ENCODE measurements at regions of chr3 and their contacts with region 1.

Region 1: GRCh38 chr3:143674100-143674968 is 173.9 kb downstream of the SLC9A9 start:
- DNase-seq: peak; percentile 80
- H3K4me3 ChIP-seq: no peak overlapping the region
- H3K27ac ChIP-seq: no peak overlapping the region
- H3K4me1 ChIP-seq: no peaks in the 10 kb centered on the region
- H3K27me3 ChIP-seq: peaks cover 0 to under 1% of the 10 kb centered on the region in 2 experiments
- CTCF ChIP-seq: peak; percentile 76 to 84
- POLR2A ChIP-seq: no peak

Region 2: DNA sequence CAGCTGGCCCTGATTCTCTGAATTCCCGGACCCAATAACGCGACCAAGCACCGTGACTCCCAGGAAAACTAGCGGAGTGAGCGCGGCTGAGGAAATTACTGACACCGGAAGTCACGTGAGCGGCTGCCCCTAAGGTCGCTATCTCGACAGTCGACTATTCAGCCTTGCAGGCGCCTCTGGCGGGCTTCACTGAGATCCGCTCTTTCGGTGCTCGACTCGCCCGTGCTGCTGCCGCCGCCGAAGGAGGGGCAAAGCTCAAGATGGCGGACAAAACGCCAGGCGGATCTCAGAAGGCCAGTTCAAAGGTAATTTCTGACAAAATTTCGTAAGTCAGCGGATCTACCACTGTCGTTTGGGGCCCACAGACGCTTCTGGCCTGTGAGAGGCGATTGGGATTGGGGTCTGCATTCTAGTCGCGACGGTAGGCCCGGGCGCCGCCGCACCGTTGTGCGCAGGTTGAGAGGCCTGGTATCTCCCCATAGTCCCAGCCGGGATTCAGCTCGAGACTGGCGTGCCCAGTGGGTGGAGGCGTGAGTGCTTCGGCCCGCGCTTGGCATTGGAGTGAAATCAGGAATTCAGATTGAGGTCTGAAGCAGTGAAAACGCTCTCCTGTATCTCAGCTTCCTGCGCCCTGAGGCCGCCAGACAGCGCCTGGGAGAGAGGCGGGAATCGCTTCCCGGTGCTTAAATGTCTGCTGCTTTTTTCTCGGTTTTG is 672.8 kb before region 1 on chr3 and contains the start of gene U2SURP:
- CTCF ChIA-PET with region 1: interaction called, 25 read pairs
- POLR2A ChIA-PET with region 1: no interaction called
- dilution Hi-C with region 1: no loop called
- intact Hi-C with region 1: no loop called
- DNase-seq: peak; percentile 98
- H3K4me3 ChIP-seq: peak within 1 kb of the TSS; percentile 73 to 93 (median 92)
- H3K27ac ChIP-seq: peak within 1 kb of the TSS; percentile 72
- H3K4me1 ChIP-seq: peaks cover 16% of the 10 kb centered on the region
- H3K27me3 ChIP-seq: peaks cover 0 to 2% of the 10 kb centered on the region in 2 experiments
- CTCF ChIP-seq: no peak
- POLR2A ChIP-seq: peak; percentile 84
- total RNA-seq, gene U2SURP: 85.2 and 92.4 TPM in 2 replicates

Region 3: GRCh38 chr3:143084856-143085731 is 589.2 kb before region 1 on chr3:
- CTCF ChIA-PET with region 1: interaction called, 20 read pairs
- POLR2A ChIA-PET with region 1: no interaction called
- dilution Hi-C with region 1: no loop called
- intact Hi-C with region 1: no loop called
- DNase-seq: peak; percentile 82
- H3K4me3 ChIP-seq: no peak overlapping the region
- H3K27ac ChIP-seq: no peak overlapping the region
- H3K4me1 ChIP-seq: peaks cover 3% of the 10 kb centered on the region
- H3K27me3 ChIP-seq: no peaks in the 10 kb centered on the region
- CTCF ChIP-seq: peak in 1 of 2 donors; percentile 6
- POLR2A ChIP-seq: no peak

Region 4: DNA sequence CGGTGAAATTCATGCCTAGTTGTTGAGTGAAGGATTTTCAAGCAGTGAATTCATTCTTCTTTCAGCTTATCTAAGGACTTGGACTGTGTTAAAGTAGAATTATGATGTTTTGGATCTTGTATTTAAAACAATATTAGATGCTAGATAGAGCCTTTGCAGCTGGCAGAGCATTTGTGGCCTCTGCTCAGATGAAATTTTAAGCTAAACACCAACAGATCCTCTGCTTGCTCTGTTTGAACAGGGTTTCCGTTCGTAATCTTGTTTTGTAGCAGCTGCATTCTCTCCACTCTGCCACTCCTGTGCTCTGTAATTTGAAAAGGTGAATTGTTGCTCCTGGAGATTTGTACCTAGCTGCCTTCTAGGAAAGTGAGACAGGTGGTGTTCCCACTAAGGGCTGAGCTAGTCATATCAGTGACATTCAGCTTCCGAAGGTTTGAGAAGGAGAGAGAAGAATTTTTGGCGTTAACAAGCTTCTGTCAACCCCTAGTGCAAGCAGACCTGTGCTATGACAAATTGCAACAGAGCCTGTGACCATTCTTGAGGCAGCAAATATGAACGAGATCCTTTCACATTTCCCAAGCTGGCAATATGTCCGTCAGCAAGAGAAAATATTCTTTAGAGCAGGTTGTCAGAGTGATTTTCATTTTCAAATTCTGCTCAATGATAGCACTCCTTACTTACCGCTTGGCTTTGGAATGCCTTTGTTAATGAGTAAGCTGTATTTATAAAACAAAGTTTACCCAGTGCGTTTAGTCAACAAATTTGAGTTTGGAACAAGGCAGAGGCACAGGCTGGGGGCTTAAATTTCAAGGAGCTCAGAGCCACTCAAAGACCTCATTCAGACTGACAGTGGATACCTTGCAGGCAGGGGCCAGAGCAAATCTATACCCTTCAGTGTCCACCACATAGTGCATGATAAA is 549.5 kb before region 1 on chr3:
- CTCF ChIA-PET with region 1: interaction called, 31 read pairs
- POLR2A ChIA-PET with region 1: no interaction called
- dilution Hi-C with region 1: no loop called
- intact Hi-C with region 1: loop called (anchors 1 kb)
- DNase-seq: no peak
- H3K4me3 ChIP-seq: no peak overlapping the region
- H3K27ac ChIP-seq: no peak overlapping the region
- H3K4me1 ChIP-seq: no peaks in the 10 kb centered on the region
- H3K27me3 ChIP-seq: no peaks in the 10 kb centered on the region
- CTCF ChIP-seq: no peak
- POLR2A ChIP-seq: no peak

Region 5: DNA sequence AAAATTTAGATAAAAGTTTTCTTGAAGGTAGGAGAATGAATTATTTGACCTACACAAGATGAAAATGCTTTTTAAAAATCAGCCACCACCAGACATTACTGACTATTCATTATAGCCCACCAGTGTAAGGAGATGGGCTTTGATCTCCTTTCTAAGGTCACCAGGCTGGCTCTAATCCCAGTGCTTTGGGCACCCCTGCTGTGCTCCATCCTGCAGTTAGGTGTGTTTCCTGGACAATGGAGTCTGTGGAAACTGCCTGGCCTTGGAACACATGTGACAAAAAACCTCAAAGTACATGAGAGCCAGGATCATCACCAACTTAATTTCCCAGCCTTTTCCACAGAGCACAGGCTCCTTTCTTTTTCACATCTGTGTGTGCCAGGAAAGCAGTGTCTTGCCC is 293.9 kb before region 1 on chr3:
- CTCF ChIA-PET with region 1: no interaction called
- POLR2A ChIA-PET with region 1: no interaction called
- dilution Hi-C with region 1: no loop called
- intact Hi-C with region 1: no loop called
- DNase-seq: no peak
- H3K4me3 ChIP-seq: no peak overlapping the region
- H3K27ac ChIP-seq: no peak overlapping the region
- H3K4me1 ChIP-seq: no peaks in the 10 kb centered on the region
- H3K27me3 ChIP-seq: no peaks in the 10 kb centered on the region
- CTCF ChIP-seq: no peak
- POLR2A ChIP-seq: no peak

Region 6: GRCh38 chr3:143608966-143609365 is 65.4 kb before region 1 on chr3:
- CTCF ChIA-PET with region 1: no interaction called
- POLR2A ChIA-PET with region 1: no interaction called
- dilution Hi-C with region 1: no loop called
- intact Hi-C with region 1: no loop called
- DNase-seq: no peak
- H3K4me3 ChIP-seq: no peak overlapping the region
- H3K27ac ChIP-seq: no peak overlapping the region
- H3K4me1 ChIP-seq: no peaks in the 10 kb centered on the region
- H3K27me3 ChIP-seq: no peaks in the 10 kb centered on the region
- CTCF ChIP-seq: no peak
- POLR2A ChIP-seq: no peak

Region 7: GRCh38 chr3:143644370-143645089 is 29.8 kb before region 1 on chr3:
- CTCF ChIA-PET with region 1: interaction called, 24 read pairs
- POLR2A ChIA-PET with region 1: no interaction called
- dilution Hi-C with region 1: no loop called
- intact Hi-C with region 1: loop called (anchors 2 kb)
- DNase-seq: peak; percentile 87
- H3K4me3 ChIP-seq: no peak overlapping the region
- H3K27ac ChIP-seq: no peak overlapping the region
- H3K4me1 ChIP-seq: peaks cover 11% of the 10 kb centered on the region
- H3K27me3 ChIP-seq: no peaks in the 10 kb centered on the region
- CTCF ChIP-seq: peak; percentile 55 to 60
- POLR2A ChIP-seq: no peak

Region 8: GRCh38 chr3:143685491-143685890 is 11.2 kb after region 1 on chr3:
- CTCF ChIA-PET with region 1: interaction called, 37 read pairs
- POLR2A ChIA-PET with region 1: no interaction called
- dilution Hi-C with region 1: no loop called
- intact Hi-C with region 1: no loop called
- DNase-seq: no peak
- H3K4me3 ChIP-seq: no peak overlapping the region
- H3K27ac ChIP-seq: no peak overlapping the region
- H3K4me1 ChIP-seq: no peaks in the 10 kb centered on the region
- H3K27me3 ChIP-seq: peaks cover 0 to 2% of the 10 kb centered on the region in 2 experiments
- CTCF ChIP-seq: no peak
- POLR2A ChIP-seq: no peak

Region 9: DNA sequence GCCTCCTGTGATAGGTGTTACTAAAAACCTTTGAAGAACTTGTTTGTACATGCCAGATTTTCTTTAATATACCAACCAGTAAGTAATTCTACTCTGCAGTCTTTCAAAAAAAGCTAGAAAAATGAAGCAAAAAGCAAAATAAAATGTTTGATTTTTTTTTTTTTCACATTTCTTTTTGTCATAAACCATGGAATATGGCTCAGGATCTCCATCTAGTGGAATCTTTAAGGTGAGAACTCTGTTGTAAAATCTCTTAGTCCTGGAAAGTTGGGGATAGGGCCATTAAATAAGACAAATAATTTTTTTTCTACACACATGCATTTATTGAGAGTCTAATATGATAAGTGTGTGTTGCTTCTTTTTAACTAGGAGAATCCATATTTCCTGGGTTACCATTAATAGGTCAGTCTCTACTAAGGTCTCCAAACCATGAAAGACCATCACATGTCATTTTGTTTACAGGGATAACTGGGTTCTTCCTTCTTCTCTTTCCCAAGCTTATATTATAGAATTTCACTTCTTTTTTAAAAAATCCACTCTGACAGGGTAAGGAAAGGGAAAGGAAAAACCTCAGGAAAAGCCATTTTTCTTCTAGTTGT is 89.3 kb after region 1 on chr3:
- CTCF ChIA-PET with region 1: interaction called, 11 read pairs
- POLR2A ChIA-PET with region 1: no interaction called
- dilution Hi-C with region 1: no loop called
- intact Hi-C with region 1: no loop called
- DNase-seq: peak; percentile 38
- H3K4me3 ChIP-seq: no peak overlapping the region
- H3K27ac ChIP-seq: no peak overlapping the region
- H3K4me1 ChIP-seq: no peaks in the 10 kb centered on the region
- H3K27me3 ChIP-seq: no peaks in the 10 kb centered on the region
- CTCF ChIP-seq: peak; percentile 18 to 22
- POLR2A ChIP-seq: no peak